ENCODE measurements at regions of chr9 and their contacts with region 1.

Region 1: DNA sequence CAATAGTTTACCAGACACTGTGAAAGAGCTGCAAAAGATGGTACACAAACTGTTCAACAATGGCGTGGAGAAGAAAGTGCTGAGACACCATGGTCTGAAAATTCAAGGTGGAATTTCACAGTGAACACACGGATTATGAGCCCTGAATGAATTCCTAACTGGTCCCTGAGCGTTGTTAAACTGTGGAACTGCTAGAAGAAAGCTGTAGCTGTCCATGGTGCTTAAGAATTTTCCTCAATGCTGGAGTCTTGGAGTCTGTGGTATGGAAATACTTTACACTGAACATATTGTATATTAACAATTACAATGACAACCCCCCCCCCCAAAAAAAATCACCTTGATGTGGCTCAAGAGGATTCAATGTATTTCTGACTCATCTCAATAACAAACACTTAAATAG is 68.5 kb downstream of the SLC24A2 start:
- DNase-seq: no peak
- ATAC-seq: no peak
- H3K4me3 ChIP-seq: no peak overlapping the region
- H3K27ac ChIP-seq: no peak overlapping the region
- H3K4me1 ChIP-seq: no peaks in the 10 kb centered on the region
- H3K27me3 ChIP-seq: no peaks in the 10 kb centered on the region
- CTCF ChIP-seq: no peak
- POLR2A ChIP-seq: no peak

Region 2: GRCh38 chr9:19618816-19619215 is 101.6 kb before region 1 on chr9:
- in situ Hi-C with region 1: loop called in 1 of 4 experiments (anchors 25 kb)
- intact Hi-C with region 1: no loop called
- DNase-seq: no peak
- ATAC-seq: no peak
- H3K4me3 ChIP-seq: no peak overlapping the region
- H3K27ac ChIP-seq: no peak overlapping the region
- H3K4me1 ChIP-seq: no peaks in the 10 kb centered on the region
- H3K27me3 ChIP-seq: no peaks in the 10 kb centered on the region
- CTCF ChIP-seq: no peak
- POLR2A ChIP-seq: no peak

Region 3: GRCh38 chr9:19757745-19758144 is 37.4 kb after region 1 on chr9:
- in situ Hi-C with region 1: no loop called
- intact Hi-C with region 1: no loop called
- DNase-seq: no peak
- ATAC-seq: no peak
- H3K4me3 ChIP-seq: no peak overlapping the region
- H3K27ac ChIP-seq: no peak overlapping the region
- H3K4me1 ChIP-seq: no peaks in the 10 kb centered on the region
- H3K27me3 ChIP-seq: no peaks in the 10 kb centered on the region
- CTCF ChIP-seq: no peak
- POLR2A ChIP-seq: no peak

Measured in gastrocnemius medialis (tissue), 4 donors.